Naive thymus-derived CD4-positive, alpha-beta T cell (primary cell): ENCODE measurements at regions of chr3 and their contacts with region 1.

Region 1: DNA sequence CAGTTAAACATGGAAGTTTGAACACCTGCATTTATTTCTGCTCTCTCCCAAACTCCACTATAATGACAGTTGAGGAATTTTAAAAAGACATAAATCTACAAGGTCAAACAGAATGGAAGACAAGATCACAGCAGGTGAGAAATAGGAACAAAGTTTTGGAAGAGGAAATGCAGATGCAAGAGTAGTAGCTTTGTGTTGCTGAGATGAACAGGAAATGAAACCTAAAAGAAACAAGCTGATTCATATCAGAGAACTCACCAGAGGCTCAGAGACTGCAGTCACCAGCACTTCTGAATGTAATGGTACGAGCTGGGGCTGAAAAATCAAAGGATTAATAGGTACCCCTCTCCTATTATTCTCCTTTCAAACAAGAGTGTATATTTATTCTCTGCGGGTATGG is 459.9 kb downstream of the RAP2B start:
- DNase-seq: peak in 4 of 9 donors; percentile 17 to 35 (median 30)
- ATAC-seq: peak; percentile 64
- H3K4me3 ChIP-seq: peak overlapping the region; percentile 3
- H3K4me3 Mint-ChIP-seq: peak overlapping the region; percentile 33 to 83 (median 58)
- H3K27ac ChIP-seq: no peak overlapping the region
- H3K27ac Mint-ChIP-seq: peak overlapping the region; percentile 48 to 90 (median 78)
- H3K4me1 ChIP-seq: peaks cover 40% of the 10 kb centered on the region in 2 donors
- H3K4me1 Mint-ChIP-seq: peaks cover 21 to 63% (median 56%) of the 10 kb centered on the region in 7 donors
- H3K27me3 ChIP-seq: no peaks in the 10 kb centered on the region
- H3K27me3 Mint-ChIP-seq: no peaks in the 10 kb centered on the region

Region 2: GRCh38 chr3:153221748-153222162 is 400.2 kb before region 1 on chr3:
- CTCF ChIA-PET with region 1: no interaction called
- POLR2A ChIA-PET with region 1: interaction called, 4 read pairs
- intact Hi-C with region 1: loop called in 1 of 2 experiments (anchors 2 kb)
- DNase-seq: peak; percentile 31 to 88 (median 82)
- ATAC-seq: peak; percentile 97
- H3K4me3 ChIP-seq: peak overlapping the region; percentile 39
- H3K4me3 Mint-ChIP-seq: peak overlapping the region; percentile 66 to 89 (median 84)
- H3K27ac ChIP-seq: peak overlapping the region; percentile 70
- H3K27ac Mint-ChIP-seq: peak overlapping the region in 8 of 9 donors; percentile 90 to 98 (median 96)
- H3K4me1 ChIP-seq: peaks cover 35 to 61% of the 10 kb centered on the region in 2 donors
- H3K4me1 Mint-ChIP-seq: peaks cover 6 to 73% (median 58%) of the 10 kb centered on the region in 7 donors
- H3K27me3 ChIP-seq: no peaks in the 10 kb centered on the region
- H3K27me3 Mint-ChIP-seq: no peaks in the 10 kb centered on the region

Region 3: GRCh38 chr3:153640689-153641301 is 18.8 kb after region 1 on chr3:
- CTCF ChIA-PET with region 1: no interaction called
- POLR2A ChIA-PET with region 1: interaction called, 20 read pairs
- intact Hi-C with region 1: loop called (anchors 1 kb)
- DNase-seq: no peak
- ATAC-seq: no peak
- H3K4me3 ChIP-seq: no peak overlapping the region
- H3K4me3 Mint-ChIP-seq: peak overlapping the region in 1 of 10 donors; percentile 68
- H3K27ac ChIP-seq: no peak overlapping the region
- H3K27ac Mint-ChIP-seq: no peak overlapping the region
- H3K4me1 ChIP-seq: peaks cover 16 to 24% of the 10 kb centered on the region in 2 donors
- H3K4me1 Mint-ChIP-seq: peaks cover 37 to 53% (median 45%) of the 10 kb centered on the region in 7 donors
- H3K27me3 ChIP-seq: no peaks in the 10 kb centered on the region
- H3K27me3 Mint-ChIP-seq: no peaks in the 10 kb centered on the region

Region 4: GRCh38 chr3:153679714-153680113 is 57.8 kb after region 1 on chr3:
- CTCF ChIA-PET with region 1: no interaction called
- POLR2A ChIA-PET with region 1: interaction called, 3 read pairs
- intact Hi-C with region 1: loop called (anchors 2 to 5 kb)
- DNase-seq: no peak
- ATAC-seq: no peak
- H3K4me3 ChIP-seq: no peak overlapping the region
- H3K4me3 Mint-ChIP-seq: peak overlapping the region in 1 of 10 donors; percentile 7
- H3K27ac ChIP-seq: no peak overlapping the region
- H3K27ac Mint-ChIP-seq: peak overlapping the region in 1 of 9 donors; percentile 68
- H3K4me1 ChIP-seq: no peaks in the 10 kb centered on the region
- H3K4me1 Mint-ChIP-seq: peaks cover 4 to 24% (median 22%) of the 10 kb centered on the region in 7 donors
- H3K27me3 ChIP-seq: no peaks in the 10 kb centered on the region
- H3K27me3 Mint-ChIP-seq: no peaks in the 10 kb centered on the region

Region 5: GRCh38 chr3:154507727-154508126 is 885.8 kb after region 1 on chr3:
- CTCF ChIA-PET with region 1: no interaction called
- POLR2A ChIA-PET with region 1: no interaction called
- intact Hi-C with region 1: no loop called
- DNase-seq: no peak
- ATAC-seq: no peak
- H3K4me3 ChIP-seq: no peak overlapping the region
- H3K4me3 Mint-ChIP-seq: no peak overlapping the region
- H3K27ac ChIP-seq: no peak overlapping the region
- H3K27ac Mint-ChIP-seq: no peak overlapping the region
- H3K4me1 ChIP-seq: no peaks in the 10 kb centered on the region
- H3K4me1 Mint-ChIP-seq: no peaks in the 10 kb centered on the region
- H3K27me3 ChIP-seq: no peaks in the 10 kb centered on the region
- H3K27me3 Mint-ChIP-seq: peaks cover 0 to 4% (median 0%) of the 10 kb centered on the region in 5 donors